GM12878 (cell line): ENCODE measurements at regions of chr4 and their contacts with region 1.

Region 1: DNA sequence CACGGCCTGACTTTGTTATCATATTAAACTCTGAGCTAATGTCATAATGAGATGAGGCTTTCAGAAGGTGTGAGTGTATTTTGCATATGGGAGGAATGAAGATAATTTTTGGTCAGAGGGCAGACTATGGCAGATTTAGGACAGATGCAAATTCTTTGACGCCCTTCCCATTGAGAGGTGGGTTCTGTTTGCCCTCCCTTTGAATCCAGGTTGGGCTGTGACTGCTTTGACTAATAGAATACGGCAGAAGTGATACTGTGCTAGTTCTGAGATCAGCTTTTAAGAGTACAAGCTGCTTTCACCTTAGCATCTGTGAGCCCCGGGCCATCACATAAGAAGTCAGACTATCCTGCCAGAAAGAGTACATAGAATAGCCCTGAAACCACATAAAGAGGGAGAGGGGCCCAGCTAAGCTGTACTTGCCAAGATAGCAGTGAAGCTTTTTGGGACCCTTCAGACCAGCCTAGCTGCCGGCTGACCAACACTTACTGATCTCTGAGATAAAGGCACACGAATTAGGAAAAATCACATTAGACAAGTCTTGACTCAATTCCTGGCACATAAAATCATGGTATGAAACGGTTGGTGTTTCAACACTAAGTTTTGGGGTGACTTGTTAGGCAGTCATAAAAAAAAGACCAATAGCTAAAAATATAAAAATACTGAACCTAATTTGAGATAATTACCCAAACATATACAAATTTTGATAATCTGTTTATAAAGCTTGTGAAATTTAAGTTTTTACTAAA is 166.7 kb upstream of the SH3RF1 start:
- DNase-seq: peak; percentile 89
- ATAC-seq: peak; percentile 93
- H3K4me3 ChIP-seq: no peak overlapping the region; the same call in 1 of the 2 replicates
- H3K27ac ChIP-seq: peak overlapping the region; percentile 98
- H3K4me1 ChIP-seq: peaks cover 42% of the 10 kb centered on the region
- H3K27me3 ChIP-seq: no peaks in the 10 kb centered on the region
- CTCF ChIP-seq: no peak
- EP300 ChIP-seq: no peak
- POLR2A ChIP-seq: peak; percentile 61
- RAD21 ChIP-seq: no peak

Region 2: GRCh38 chr4:169024762-169025161 is 412.7 kb before region 1 on chr4:
- CTCF ChIA-PET with region 1: no interaction called
- POLR2A ChIA-PET with region 1: no interaction called
- RAD21 ChIA-PET with region 1: interaction called, 4 read pairs
- SMC1A ChIA-PET with region 1: interaction called, 11 read pairs
- in situ Hi-C with region 1: no loop called
- intact Hi-C with region 1: no loop called
- DNase-seq: no peak
- ATAC-seq: peak; percentile 97
- H3K4me3 ChIP-seq: no peak overlapping the region
- H3K27ac ChIP-seq: no peak overlapping the region
- H3K4me1 ChIP-seq: no peaks in the 10 kb centered on the region
- H3K27me3 ChIP-seq: no peaks in the 10 kb centered on the region
- CTCF ChIP-seq: peak; percentile 63 to 77 (median 65)
- EP300 ChIP-seq: no peak
- POLR2A ChIP-seq: no peak
- RAD21 ChIP-seq: peak; percentile 94

Region 3: GRCh38 chr4:169210504-169211118 is 226.9 kb before region 1 on chr4:
- CTCF ChIA-PET with region 1: no interaction called
- POLR2A ChIA-PET with region 1: interaction called, 5 read pairs
- RAD21 ChIA-PET with region 1: interaction called, 8 read pairs
- SMC1A ChIA-PET with region 1: interaction called, 12 read pairs
- in situ Hi-C with region 1: no loop called
- intact Hi-C with region 1: no loop called
- DNase-seq: peak; percentile 78
- ATAC-seq: peak; percentile 96
- H3K4me3 ChIP-seq: peak overlapping the region; percentile 29; the same call in 1 of the 2 replicates
- H3K27ac ChIP-seq: peak overlapping the region; percentile 72
- H3K4me1 ChIP-seq: peaks cover 16% of the 10 kb centered on the region
- H3K27me3 ChIP-seq: no peaks in the 10 kb centered on the region
- CTCF ChIP-seq: no peak
- EP300 ChIP-seq: peak in 1 of 2 experiments; percentile 37; a peak in 1 of 4 replicates
- POLR2A ChIP-seq: no peak
- RAD21 ChIP-seq: no peak

Region 4: GRCh38 chr4:169341490-169341889 is 96.0 kb before region 1 on chr4:
- CTCF ChIA-PET with region 1: interaction called, 4 read pairs
- POLR2A ChIA-PET with region 1: interaction called, 6 read pairs
- RAD21 ChIA-PET with region 1: interaction called, 34 read pairs
- SMC1A ChIA-PET with region 1: interaction called, 39 read pairs
- in situ Hi-C with region 1: no loop called
- intact Hi-C with region 1: no loop called
- DNase-seq: peak; percentile 62
- ATAC-seq: peak; percentile 87
- H3K4me3 ChIP-seq: no peak overlapping the region
- H3K27ac ChIP-seq: peak overlapping the region; percentile 23; the same call in 1 of the 2 replicates
- H3K4me1 ChIP-seq: peaks cover 13% of the 10 kb centered on the region
- H3K27me3 ChIP-seq: no peaks in the 10 kb centered on the region
- CTCF ChIP-seq: no peak
- EP300 ChIP-seq: peak in 1 of 2 experiments; percentile 36; a peak in 1 of 4 replicates
- POLR2A ChIP-seq: no peak
- RAD21 ChIP-seq: peak; percentile 35; the same call in 1 of the 2 replicates

Region 5: GRCh38 chr4:169398316-169398715 is 39.2 kb before region 1 on chr4:
- CTCF ChIA-PET with region 1: interaction called, 5 read pairs
- POLR2A ChIA-PET with region 1: interaction called, 8 read pairs
- RAD21 ChIA-PET with region 1: interaction called, 22 read pairs
- SMC1A ChIA-PET with region 1: interaction called, 50 read pairs
- in situ Hi-C with region 1: no loop called
- intact Hi-C with region 1: loop called (anchors 2 kb)
- DNase-seq: no peak
- ATAC-seq: peak; percentile 5; the same call in 2 of the 3 replicates
- H3K4me3 ChIP-seq: no peak overlapping the region
- H3K27ac ChIP-seq: no peak overlapping the region
- H3K4me1 ChIP-seq: peaks cover 13% of the 10 kb centered on the region
- H3K27me3 ChIP-seq: no peaks in the 10 kb centered on the region
- CTCF ChIP-seq: no peak
- EP300 ChIP-seq: no peak
- POLR2A ChIP-seq: no peak
- RAD21 ChIP-seq: no peak

Region 6: GRCh38 chr4:169410839-169411770 is 26.4 kb before region 1 on chr4:
- CTCF ChIA-PET with region 1: interaction called, 33 read pairs
- POLR2A ChIA-PET with region 1: interaction called, 27 read pairs
- RAD21 ChIA-PET with region 1: interaction called, 112 read pairs
- SMC1A ChIA-PET with region 1: interaction called, 212 read pairs
- in situ Hi-C with region 1: no loop called
- intact Hi-C with region 1: no loop called
- DNase-seq: peak; percentile 93
- ATAC-seq: peak; percentile 97
- H3K4me3 ChIP-seq: 0 out of 2 replicates have a peak overlapping the region, but pooled peaks have one; percentile 46
- H3K27ac ChIP-seq: peak overlapping the region; percentile 63
- H3K4me1 ChIP-seq: peaks cover 22% of the 10 kb centered on the region
- H3K27me3 ChIP-seq: no peaks in the 10 kb centered on the region
- CTCF ChIP-seq: no peak
- EP300 ChIP-seq: peak; percentile 87 to 92
- POLR2A ChIP-seq: peak; percentile 61
- RAD21 ChIP-seq: peak; percentile 32; the same call in 1 of the 2 replicates

Region 7: GRCh38 chr4:169485791-169486742 is 48.6 kb after region 1 on chr4:
- CTCF ChIA-PET with region 1: interaction called, 10 read pairs
- POLR2A ChIA-PET with region 1: interaction called, 4 read pairs
- RAD21 ChIA-PET with region 1: interaction called, 43 read pairs
- SMC1A ChIA-PET with region 1: interaction called, 27 read pairs
- in situ Hi-C with region 1: no loop called
- intact Hi-C with region 1: no loop called
- DNase-seq: peak; percentile 68
- ATAC-seq: peak; percentile 68
- H3K4me3 ChIP-seq: no peak overlapping the region
- H3K27ac ChIP-seq: no peak overlapping the region
- H3K4me1 ChIP-seq: 0 out of 2 replicates have a peak, but pooled peaks cover 5% of the 10 kb centered on the region
- H3K27me3 ChIP-seq: no peaks in the 10 kb centered on the region
- CTCF ChIP-seq: peak; percentile 43 to 82 (median 67); a peak in 5 of 6 replicates
- EP300 ChIP-seq: no peak
- POLR2A ChIP-seq: no peak
- RAD21 ChIP-seq: peak; percentile 97

Region 8: GRCh38 chr4:169523796-169524195 is 86.3 kb after region 1 on chr4:
- CTCF ChIA-PET with region 1: no interaction called
- POLR2A ChIA-PET with region 1: no interaction called
- RAD21 ChIA-PET with region 1: no interaction called
- SMC1A ChIA-PET with region 1: no interaction called
- in situ Hi-C with region 1: no loop called
- intact Hi-C with region 1: no loop called
- DNase-seq: no peak
- ATAC-seq: no peak
- H3K4me3 ChIP-seq: no peak overlapping the region
- H3K27ac ChIP-seq: no peak overlapping the region
- H3K4me1 ChIP-seq: no peaks in the 10 kb centered on the region
- H3K27me3 ChIP-seq: no peaks in the 10 kb centered on the region
- CTCF ChIP-seq: no peak
- EP300 ChIP-seq: no peak
- POLR2A ChIP-seq: no peak
- RAD21 ChIP-seq: no peak